ENCODE measurements at regions of chr17 and their contacts with region 1.

Region 1: DNA sequence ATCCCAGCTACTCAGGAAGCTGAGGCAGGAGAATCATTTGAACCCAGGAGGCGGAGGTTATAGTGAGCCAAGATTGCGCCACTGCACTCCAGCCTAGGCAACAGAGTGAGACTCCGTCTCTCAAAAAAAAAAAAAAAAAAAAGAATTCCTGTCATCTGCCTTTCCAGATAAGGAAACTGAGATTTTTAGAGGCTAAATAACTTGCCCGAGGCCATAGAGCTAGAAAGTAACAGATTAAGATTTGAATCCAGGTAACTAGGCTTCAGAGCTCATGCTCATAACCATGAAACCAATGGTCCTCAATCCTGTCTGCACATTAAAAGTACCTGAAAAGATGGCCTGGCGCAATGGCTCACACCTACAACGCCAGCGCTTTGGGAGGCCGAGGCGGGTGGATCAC is 9.5 kb downstream of the NCBP3 start:
- DNase-seq: no peak
- H3K4me3 ChIP-seq: no peak overlapping the region
- H3K27ac ChIP-seq: no peak overlapping the region
- H3K4me1 ChIP-seq: peaks cover 9% of the 10 kb centered on the region
- H3K27me3 ChIP-seq: no peaks in the 10 kb centered on the region
- CTCF ChIP-seq: no peak

Region 2: DNA sequence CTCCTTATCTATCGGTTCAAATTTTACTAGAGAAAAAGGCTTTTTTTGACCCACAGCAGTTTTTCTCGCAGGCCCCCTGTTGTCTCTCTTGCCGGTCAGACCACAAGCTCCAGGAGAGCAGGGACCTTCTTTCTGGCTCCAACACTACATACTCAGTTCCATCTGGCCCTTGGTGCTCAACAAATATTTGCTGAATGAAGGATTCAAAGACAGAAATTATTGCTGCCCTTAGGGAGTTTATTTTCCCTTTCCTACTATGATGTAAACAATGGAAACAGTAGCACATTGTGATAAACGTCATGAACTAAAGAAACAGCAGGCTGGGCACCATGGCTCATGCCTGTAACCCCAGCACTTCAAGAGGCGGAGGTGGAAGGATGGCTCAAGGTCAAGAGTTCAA is 186.7 kb after region 1 on chr17:
- CTCF ChIA-PET with region 1: no interaction called
- POLR2A ChIA-PET with region 1: no interaction called
- intact Hi-C with region 1: no loop called
- DNase-seq: no peak
- H3K4me3 ChIP-seq: no peak overlapping the region
- H3K27ac ChIP-seq: no peak overlapping the region
- H3K4me1 ChIP-seq: no peaks in the 10 kb centered on the region
- H3K27me3 ChIP-seq: no peaks in the 10 kb centered on the region
- CTCF ChIP-seq: no peak

Region 3: DNA sequence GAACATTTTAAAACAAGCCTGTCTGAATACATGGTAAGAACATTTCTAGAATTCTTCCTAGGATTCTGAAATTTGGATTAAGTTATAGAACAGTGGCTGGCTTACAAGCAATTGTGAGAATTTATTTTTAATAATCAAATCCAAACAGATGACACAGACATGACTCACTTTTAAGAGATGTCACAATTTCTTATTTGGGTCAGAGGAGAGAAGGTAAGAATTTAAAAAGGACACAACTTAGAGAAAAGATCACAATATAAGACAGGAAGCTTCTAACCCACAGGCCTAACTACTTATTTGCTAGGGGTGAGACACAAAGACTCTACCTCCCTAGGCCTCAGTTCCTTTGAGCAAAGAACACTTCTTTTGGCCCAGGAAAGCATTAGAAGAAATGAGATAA is 273.6 kb after region 1 on chr17:
- CTCF ChIA-PET with region 1: no interaction called
- POLR2A ChIA-PET with region 1: interaction called, 15 read pairs
- intact Hi-C with region 1: no loop called
- DNase-seq: peak in 1 of 2 experiments; percentile 79
- H3K4me3 ChIP-seq: no peak overlapping the region
- H3K27ac ChIP-seq: peak overlapping the region; percentile 49
- H3K4me1 ChIP-seq: peaks cover 18% of the 10 kb centered on the region
- H3K27me3 ChIP-seq: no peaks in the 10 kb centered on the region
- CTCF ChIP-seq: no peak

Measured in PC-9 (cell line).